ENCODE measurements at regions of chr1 and their contacts with region 1.

Region 1: GRCh38 chr1:33080885-33081553 is at the start of gene AZIN2:
- DNase-seq: peak; percentile 92 to 100 (median 97)
- ATAC-seq: peak; percentile 99
- H3K4me3 ChIP-seq: peak within 1 kb of the TSS; percentile 57 to 89
- H3K4me3 Mint-ChIP-seq: peak within 1 kb of the TSS; percentile 82
- H3K27ac ChIP-seq: peak within 1 kb of the TSS; percentile 28 to 54
- H3K27ac Mint-ChIP-seq: peak within 1 kb of the TSS; percentile 82
- H3K4me1 ChIP-seq: peaks cover 22% of the 10 kb centered on the region
- H3K4me1 Mint-ChIP-seq: peaks cover 29% of the 10 kb centered on the region
- H3K27me3 ChIP-seq: peaks cover 0 to 2% of the 10 kb centered on the region in 2 experiments
- H3K27me3 Mint-ChIP-seq: no peaks in the 10 kb centered on the region
- CTCF ChIP-seq: no peak
- total RNA-seq, gene AZIN2: 3.5 to 4.1 TPM

Region 2: DNA sequence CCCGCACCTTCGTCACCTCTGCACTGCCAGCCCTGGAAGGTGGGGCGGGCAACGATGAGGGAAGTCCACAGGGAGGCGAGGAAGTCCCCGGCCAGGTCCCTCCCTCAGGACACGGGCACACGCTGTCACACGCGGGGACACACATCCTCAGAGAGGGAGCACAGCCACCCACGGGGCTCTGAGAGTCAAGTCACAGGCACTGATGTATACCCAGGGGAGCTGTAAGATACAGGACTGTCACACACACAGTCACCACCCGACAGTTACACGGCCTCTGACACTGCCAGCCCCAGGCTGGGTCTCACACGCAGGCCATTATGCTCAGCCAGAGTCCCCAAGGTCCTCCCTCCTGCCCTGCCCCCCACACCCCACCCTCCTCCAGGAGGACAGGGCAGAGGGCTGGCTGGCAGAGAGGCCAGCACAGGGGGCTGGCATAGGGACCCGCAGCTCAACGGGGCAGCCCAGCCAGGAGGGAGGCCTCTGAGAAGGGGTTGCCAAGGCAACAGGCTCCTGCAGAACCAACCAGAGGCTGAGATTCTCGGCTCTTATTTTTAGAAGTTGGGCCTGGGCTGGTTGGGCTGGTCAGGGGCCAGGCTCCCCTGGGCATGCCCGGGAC is 1299.2 kb before region 1 on chr1:
- CTCF ChIA-PET with region 1: no interaction called
- POLR2A ChIA-PET with region 1: no interaction called
- intact Hi-C with region 1: no loop called
- DNase-seq: no peak
- ATAC-seq: no peak
- H3K4me3 ChIP-seq: no peak overlapping the region
- H3K4me3 Mint-ChIP-seq: no peak overlapping the region
- H3K27ac ChIP-seq: no peak overlapping the region
- H3K27ac Mint-ChIP-seq: no peak overlapping the region
- H3K4me1 ChIP-seq: no peaks in the 10 kb centered on the region
- H3K4me1 Mint-ChIP-seq: no peaks in the 10 kb centered on the region
- H3K27me3 ChIP-seq: no peaks in the 10 kb centered on the region
- H3K27me3 Mint-ChIP-seq: peaks cover 11% of the 10 kb centered on the region
- CTCF ChIP-seq: no peak

Region 3: DNA sequence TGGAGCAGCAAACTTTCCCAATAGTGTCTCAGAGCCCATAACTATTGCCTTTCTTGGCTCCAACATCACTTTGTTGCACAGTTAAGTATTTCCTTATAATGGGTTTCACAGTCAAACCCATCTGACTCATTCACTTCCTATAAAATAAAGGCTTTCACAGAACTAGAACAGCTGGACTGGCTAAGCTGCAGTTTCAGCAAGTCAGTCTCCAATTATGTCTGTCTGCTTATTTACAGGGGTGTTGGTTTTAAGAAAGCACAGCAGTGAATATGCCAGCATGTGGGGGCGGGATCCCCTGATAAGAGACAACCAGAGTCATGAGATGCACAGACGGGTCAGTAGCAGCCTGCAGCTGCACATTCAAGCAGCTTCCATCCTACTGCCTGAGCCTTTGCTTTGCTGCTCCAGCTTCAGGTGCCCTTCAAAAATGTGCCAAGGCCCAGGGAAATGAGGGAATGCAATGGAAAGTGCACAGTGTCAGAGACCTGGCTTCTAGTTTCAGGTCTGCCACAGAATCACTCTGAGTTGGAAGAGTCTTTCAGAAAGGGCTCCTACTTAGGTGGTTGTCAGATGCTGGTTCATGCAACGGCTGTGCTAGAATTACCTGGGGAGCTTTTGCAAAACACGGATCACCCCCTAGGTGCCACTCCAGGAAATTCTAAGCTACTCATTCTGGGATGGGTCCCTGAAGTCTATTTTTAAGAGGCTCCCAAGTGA is 141.2 kb before region 1 on chr1:
- CTCF ChIA-PET with region 1: interaction called, 46 read pairs
- POLR2A ChIA-PET with region 1: no interaction called
- intact Hi-C with region 1: loop called in 1 of 2 experiments (anchors 10 kb)
- DNase-seq: no peak
- ATAC-seq: no peak
- H3K4me3 ChIP-seq: no peak overlapping the region
- H3K4me3 Mint-ChIP-seq: no peak overlapping the region
- H3K27ac ChIP-seq: no peak overlapping the region
- H3K27ac Mint-ChIP-seq: no peak overlapping the region
- H3K4me1 ChIP-seq: no peaks in the 10 kb centered on the region
- H3K4me1 Mint-ChIP-seq: peaks cover 5% of the 10 kb centered on the region
- H3K27me3 ChIP-seq: no peaks in the 10 kb centered on the region
- H3K27me3 Mint-ChIP-seq: no peaks in the 10 kb centered on the region
- CTCF ChIP-seq: no peak

Region 4: GRCh38 chr1:33070628-33071027 is 10.4 kb before region 1 on chr1:
- CTCF ChIA-PET with region 1: no interaction called
- POLR2A ChIA-PET with region 1: no interaction called
- intact Hi-C with region 1: no loop called
- DNase-seq: no peak
- ATAC-seq: no peak
- H3K4me3 ChIP-seq: no peak overlapping the region
- H3K4me3 Mint-ChIP-seq: no peak overlapping the region
- H3K27ac ChIP-seq: no peak overlapping the region
- H3K27ac Mint-ChIP-seq: no peak overlapping the region
- H3K4me1 ChIP-seq: no peaks in the 10 kb centered on the region
- H3K4me1 Mint-ChIP-seq: no peaks in the 10 kb centered on the region
- H3K27me3 ChIP-seq: no peaks in the 10 kb centered on the region
- H3K27me3 Mint-ChIP-seq: peaks cover 8% of the 10 kb centered on the region
- CTCF ChIP-seq: no peak

Region 5: DNA sequence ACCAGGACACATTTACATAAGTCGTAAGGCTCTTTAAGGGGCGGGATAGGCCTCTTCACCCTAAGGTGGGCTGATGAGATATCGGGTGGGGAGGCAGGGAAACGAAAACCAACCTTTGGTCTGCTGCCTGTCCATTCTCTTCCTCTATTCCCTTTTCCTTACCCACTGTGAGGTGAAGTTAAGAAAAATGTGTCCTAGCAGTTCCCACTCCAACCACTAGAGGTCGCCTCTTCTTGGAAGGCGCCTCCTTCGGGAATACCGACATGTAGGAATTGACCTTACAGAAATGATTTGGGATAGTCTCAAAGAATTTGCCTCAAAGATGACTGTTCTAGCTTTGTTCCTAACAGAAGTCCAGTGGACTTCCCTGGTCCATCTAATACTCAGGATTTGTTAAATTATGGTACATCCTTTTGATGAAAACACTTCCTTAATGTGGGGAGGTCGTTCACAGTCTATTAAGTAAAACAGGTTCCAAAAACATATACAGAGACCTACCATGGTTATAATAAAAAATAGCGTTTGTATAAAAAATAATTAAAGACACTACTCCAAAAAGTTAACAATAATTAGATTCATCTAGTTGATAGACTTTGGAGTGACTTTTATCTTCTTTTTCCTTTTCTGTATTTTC is 14.1 kb after region 1 on chr1:
- CTCF ChIA-PET with region 1: interaction called, 24 read pairs
- POLR2A ChIA-PET with region 1: no interaction called
- intact Hi-C with region 1: loop called (anchors 1 kb)
- DNase-seq: peak in 4 of 9 experiments; percentile 29 to 53 (median 36)
- ATAC-seq: no peak
- H3K4me3 ChIP-seq: no peak overlapping the region
- H3K4me3 Mint-ChIP-seq: no peak overlapping the region
- H3K27ac ChIP-seq: no peak overlapping the region
- H3K27ac Mint-ChIP-seq: no peak overlapping the region
- H3K4me1 ChIP-seq: peaks cover 44% of the 10 kb centered on the region
- H3K4me1 Mint-ChIP-seq: peaks cover 37% of the 10 kb centered on the region
- H3K27me3 ChIP-seq: no peaks in the 10 kb centered on the region
- H3K27me3 Mint-ChIP-seq: no peaks in the 10 kb centered on the region
- CTCF ChIP-seq: peak; percentile 79